ENCODE measurements at regions of chr1 and their contacts with region 1.

Region 1: GRCh38 chr1:184025242-184025675 is 12.3 kb downstream of the COLGALT2 start:
- DNase-seq: peak; percentile 88
- H3K4me3 ChIP-seq: no peak overlapping the region
- H3K27ac ChIP-seq: peak overlapping the region; percentile 81
- H3K4me1 ChIP-seq: peaks cover 98% of the 10 kb centered on the region
- H3K27me3 ChIP-seq: no peaks in the 10 kb centered on the region
- CTCF ChIP-seq: no peak

Region 2: GRCh38 chr1:183942933-183943693 is 82.1 kb before region 1 on chr1:
- CTCF ChIA-PET with region 1: no interaction called
- POLR2A ChIA-PET with region 1: interaction called, 14 read pairs
- intact Hi-C with region 1: no loop called
- DNase-seq: peak; percentile 96
- H3K4me3 ChIP-seq: no peak overlapping the region
- H3K27ac ChIP-seq: peak overlapping the region; percentile 74
- H3K4me1 ChIP-seq: peaks cover 22% of the 10 kb centered on the region
- H3K27me3 ChIP-seq: no peaks in the 10 kb centered on the region
- CTCF ChIP-seq: peak; percentile 54

Region 3: DNA sequence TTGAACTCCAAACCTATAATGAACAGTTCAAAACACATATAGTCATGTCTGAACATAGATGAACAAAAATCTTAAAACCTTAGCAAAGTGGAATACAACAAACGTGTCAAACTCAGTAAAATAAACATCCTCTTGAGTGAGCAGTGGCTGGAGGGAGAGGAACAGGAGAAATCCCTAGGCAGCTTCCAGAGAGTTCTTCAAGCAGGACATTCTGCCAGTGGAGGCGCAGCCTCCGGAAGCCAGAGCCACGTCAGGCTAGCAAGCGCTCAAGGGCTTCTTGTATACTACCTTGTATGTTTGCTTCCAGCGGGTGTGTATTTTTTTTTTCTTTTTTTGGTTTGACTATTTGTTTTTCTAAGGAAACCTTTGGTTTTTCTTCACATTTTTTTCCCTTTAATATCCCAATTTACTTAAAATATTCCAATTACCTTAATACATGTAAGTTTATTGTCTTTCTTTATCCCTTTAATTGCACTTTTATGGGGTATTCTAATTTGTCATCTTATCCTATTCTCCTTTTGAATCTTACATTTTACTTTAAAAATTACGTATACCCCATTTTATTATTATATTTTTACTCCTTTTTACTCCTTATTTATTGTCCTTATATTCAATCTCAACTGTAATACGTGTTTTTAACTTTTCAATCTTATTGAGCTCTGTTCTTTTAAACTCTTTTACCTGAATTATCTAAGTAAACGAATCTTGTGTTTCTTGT is 29.8 kb before region 1 on chr1:
- CTCF ChIA-PET with region 1: no interaction called
- POLR2A ChIA-PET with region 1: no interaction called
- intact Hi-C with region 1: no loop called
- DNase-seq: no peak
- H3K4me3 ChIP-seq: no peak overlapping the region
- H3K27ac ChIP-seq: no peak overlapping the region
- H3K4me1 ChIP-seq: peaks cover 5% of the 10 kb centered on the region
- H3K27me3 ChIP-seq: no peaks in the 10 kb centered on the region
- CTCF ChIP-seq: no peak

Region 4: DNA sequence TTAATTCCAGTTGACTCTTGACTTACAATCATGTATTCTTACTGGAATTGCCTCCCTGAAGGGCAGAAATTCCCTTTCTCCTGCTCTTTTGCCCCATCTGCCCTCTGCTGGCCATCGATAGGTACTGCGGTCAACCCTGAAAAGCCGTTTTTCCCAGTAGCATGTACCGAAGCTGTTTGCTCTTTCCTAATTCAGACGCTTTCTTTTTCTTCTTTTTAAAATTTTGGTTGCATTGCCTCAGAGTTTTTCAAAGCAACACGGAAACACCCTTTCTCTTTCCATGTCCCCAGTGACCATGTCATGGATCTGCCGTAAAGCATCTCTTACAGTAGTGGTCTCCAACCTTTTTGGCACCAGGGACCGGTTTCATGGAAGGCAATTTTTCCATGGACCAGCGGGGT is 197.4 kb after region 1 on chr1:
- CTCF ChIA-PET with region 1: no interaction called
- POLR2A ChIA-PET with region 1: no interaction called
- intact Hi-C with region 1: no loop called
- DNase-seq: peak; percentile 74
- H3K4me3 ChIP-seq: no peak overlapping the region
- H3K27ac ChIP-seq: no peak overlapping the region
- H3K4me1 ChIP-seq: peaks cover 22% of the 10 kb centered on the region
- H3K27me3 ChIP-seq: no peaks in the 10 kb centered on the region
- CTCF ChIP-seq: peak; percentile 95

Region 5: GRCh38 chr1:184242507-184242943 is 217.3 kb after region 1 on chr1:
- CTCF ChIA-PET with region 1: no interaction called
- POLR2A ChIA-PET with region 1: no interaction called
- intact Hi-C with region 1: no loop called
- DNase-seq: no peak
- H3K4me3 ChIP-seq: no peak overlapping the region
- H3K27ac ChIP-seq: no peak overlapping the region
- H3K4me1 ChIP-seq: no peaks in the 10 kb centered on the region
- H3K27me3 ChIP-seq: no peaks in the 10 kb centered on the region
- CTCF ChIP-seq: no peak

Region 6: GRCh38 chr1:184724843-184725242 is 699.6 kb after region 1 on chr1:
- CTCF ChIA-PET with region 1: no interaction called
- POLR2A ChIA-PET with region 1: no interaction called
- intact Hi-C with region 1: no loop called
- DNase-seq: no peak
- H3K4me3 ChIP-seq: no peak overlapping the region
- H3K27ac ChIP-seq: no peak overlapping the region
- H3K4me1 ChIP-seq: peaks cover 4% of the 10 kb centered on the region
- H3K27me3 ChIP-seq: no peaks in the 10 kb centered on the region
- CTCF ChIP-seq: no peak